ENCODE measurements at regions of chr14 and their contacts with region 1.

Region 1: DNA sequence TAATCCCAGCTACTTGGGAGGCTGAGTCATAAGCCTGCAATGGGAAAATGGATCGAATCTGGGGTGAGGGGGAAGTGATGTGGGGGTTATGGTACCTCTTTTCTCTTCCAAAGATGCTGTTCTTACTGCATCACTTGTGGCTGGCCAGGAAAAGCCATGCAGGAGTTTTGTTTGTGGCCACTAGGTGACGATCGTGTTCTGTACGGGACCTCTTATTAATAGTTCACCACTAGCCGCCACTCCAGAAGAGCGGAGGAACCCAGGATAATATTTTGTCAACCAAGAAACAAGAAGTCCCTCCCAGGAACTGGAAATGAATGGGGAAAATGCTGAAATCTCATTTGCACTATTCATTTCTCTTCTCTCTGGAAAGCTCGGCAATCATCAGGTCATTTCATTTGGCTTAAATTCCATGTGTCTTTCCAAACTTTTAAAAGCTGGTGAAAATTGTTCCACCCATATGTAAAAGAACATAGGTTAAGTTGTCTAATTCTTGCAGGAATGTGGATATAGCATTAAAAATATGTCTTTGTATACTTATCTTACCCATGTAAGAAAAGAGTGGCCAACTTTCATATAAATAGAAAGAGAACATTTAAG is 8.9 kb downstream of the GPR65 start:
- DNase-seq: peak; percentile 69
- H3K4me3 Mint-ChIP-seq: no peak overlapping the region
- H3K27ac Mint-ChIP-seq: no peak overlapping the region
- H3K4me1 Mint-ChIP-seq: no peaks in the 10 kb centered on the region
- H3K27me3 Mint-ChIP-seq: peaks cover 46% of the 10 kb centered on the region
- CTCF ChIP-seq: peak; percentile 92

Region 2: GRCh38 chr14:87547536-87547935 is 466.3 kb before region 1 on chr14:
- CTCF ChIA-PET with region 1: no interaction called
- POLR2A ChIA-PET with region 1: no interaction called
- intact Hi-C with region 1: no loop called
- DNase-seq: no peak
- H3K4me3 Mint-ChIP-seq: no peak overlapping the region
- H3K27ac Mint-ChIP-seq: no peak overlapping the region
- H3K4me1 Mint-ChIP-seq: no peaks in the 10 kb centered on the region
- H3K27me3 Mint-ChIP-seq: no peaks in the 10 kb centered on the region
- CTCF ChIP-seq: no peak

Region 3: GRCh38 chr14:87994974-87995373 is 18.9 kb before region 1 on chr14:
- CTCF ChIA-PET with region 1: interaction called, 10 read pairs
- POLR2A ChIA-PET with region 1: no interaction called
- intact Hi-C with region 1: no loop called
- DNase-seq: no peak
- H3K4me3 Mint-ChIP-seq: no peak overlapping the region
- H3K27ac Mint-ChIP-seq: no peak overlapping the region
- H3K4me1 Mint-ChIP-seq: peaks cover under 1% of the 10 kb centered on the region
- H3K27me3 Mint-ChIP-seq: peaks cover 20% of the 10 kb centered on the region
- CTCF ChIP-seq: no peak

Region 4: DNA sequence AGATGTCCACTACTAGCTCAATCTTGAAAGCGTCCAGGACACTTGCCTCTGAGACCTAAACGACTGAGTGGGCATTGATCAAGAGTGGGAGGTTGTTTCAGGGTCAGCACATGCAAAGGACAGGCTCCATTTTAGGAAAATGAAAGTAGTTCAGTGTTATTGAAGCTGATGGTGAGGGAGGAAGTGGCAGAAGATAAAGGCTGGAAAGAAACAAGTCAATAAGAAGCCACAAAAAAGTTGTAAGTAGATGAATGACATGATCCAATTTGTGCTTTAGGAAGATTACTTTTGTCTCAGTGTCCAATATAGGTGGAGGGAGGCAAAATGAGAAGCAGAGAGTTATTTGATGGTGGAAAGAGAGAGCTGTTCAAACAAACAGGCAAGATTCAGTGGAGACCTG is 13.0 kb after region 1 on chr14:
- CTCF ChIA-PET with region 1: interaction called, 11 read pairs
- POLR2A ChIA-PET with region 1: no interaction called
- intact Hi-C with region 1: no loop called
- DNase-seq: no peak
- H3K4me3 Mint-ChIP-seq: no peak overlapping the region
- H3K27ac Mint-ChIP-seq: no peak overlapping the region
- H3K4me1 Mint-ChIP-seq: no peaks in the 10 kb centered on the region
- H3K27me3 Mint-ChIP-seq: peaks cover 31% of the 10 kb centered on the region
- CTCF ChIP-seq: no peak

Region 5: DNA sequence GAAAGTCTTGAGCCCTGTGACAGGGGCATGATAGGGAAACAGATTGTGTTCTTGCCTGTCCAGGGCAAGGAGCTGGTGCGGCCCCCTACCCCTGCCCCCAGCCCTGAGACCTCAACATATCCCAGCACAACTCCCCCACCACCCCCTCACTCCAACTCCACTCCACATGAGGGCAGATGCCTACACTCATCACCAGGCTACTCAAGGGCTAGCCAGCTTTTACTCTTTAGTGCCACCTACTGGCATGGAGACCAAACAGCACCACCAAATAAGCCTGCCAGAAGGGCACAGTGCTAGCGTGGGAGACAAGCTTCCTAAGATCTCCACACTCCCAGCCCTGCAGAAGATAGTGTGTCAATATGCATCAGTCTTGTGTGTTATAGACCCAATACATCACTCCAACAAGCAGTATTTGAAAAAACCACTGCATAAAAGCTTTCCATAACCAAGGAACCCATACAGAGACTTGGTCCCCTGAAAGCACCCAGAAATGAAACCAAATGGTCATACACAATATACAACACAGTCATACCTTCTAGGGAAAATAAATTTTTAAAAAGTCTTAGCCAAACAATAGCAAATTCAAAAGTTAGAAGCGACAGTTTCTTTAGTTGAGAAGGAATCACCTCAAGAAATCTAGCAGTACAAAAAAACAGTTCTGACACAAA is 154.8 kb after region 1 on chr14:
- CTCF ChIA-PET with region 1: interaction called, 51 read pairs
- POLR2A ChIA-PET with region 1: no interaction called
- intact Hi-C with region 1: loop called (anchors 1 kb)
- DNase-seq: peak; percentile 60
- H3K4me3 Mint-ChIP-seq: no peak overlapping the region
- H3K27ac Mint-ChIP-seq: no peak overlapping the region
- H3K4me1 Mint-ChIP-seq: no peaks in the 10 kb centered on the region
- H3K27me3 Mint-ChIP-seq: peaks cover 39% of the 10 kb centered on the region
- CTCF ChIP-seq: peak; percentile 60

Region 6: GRCh38 chr14:88380405-88380804 is 366.6 kb after region 1 on chr14:
- CTCF ChIA-PET with region 1: interaction called, 4 read pairs
- POLR2A ChIA-PET with region 1: no interaction called
- intact Hi-C with region 1: loop called (anchors 5 kb)
- DNase-seq: peak; percentile 8
- H3K4me3 Mint-ChIP-seq: no peak overlapping the region
- H3K27ac Mint-ChIP-seq: no peak overlapping the region
- H3K4me1 Mint-ChIP-seq: no peaks in the 10 kb centered on the region
- H3K27me3 Mint-ChIP-seq: peaks cover 15% of the 10 kb centered on the region
- CTCF ChIP-seq: peak; percentile 21

Region 7: DNA sequence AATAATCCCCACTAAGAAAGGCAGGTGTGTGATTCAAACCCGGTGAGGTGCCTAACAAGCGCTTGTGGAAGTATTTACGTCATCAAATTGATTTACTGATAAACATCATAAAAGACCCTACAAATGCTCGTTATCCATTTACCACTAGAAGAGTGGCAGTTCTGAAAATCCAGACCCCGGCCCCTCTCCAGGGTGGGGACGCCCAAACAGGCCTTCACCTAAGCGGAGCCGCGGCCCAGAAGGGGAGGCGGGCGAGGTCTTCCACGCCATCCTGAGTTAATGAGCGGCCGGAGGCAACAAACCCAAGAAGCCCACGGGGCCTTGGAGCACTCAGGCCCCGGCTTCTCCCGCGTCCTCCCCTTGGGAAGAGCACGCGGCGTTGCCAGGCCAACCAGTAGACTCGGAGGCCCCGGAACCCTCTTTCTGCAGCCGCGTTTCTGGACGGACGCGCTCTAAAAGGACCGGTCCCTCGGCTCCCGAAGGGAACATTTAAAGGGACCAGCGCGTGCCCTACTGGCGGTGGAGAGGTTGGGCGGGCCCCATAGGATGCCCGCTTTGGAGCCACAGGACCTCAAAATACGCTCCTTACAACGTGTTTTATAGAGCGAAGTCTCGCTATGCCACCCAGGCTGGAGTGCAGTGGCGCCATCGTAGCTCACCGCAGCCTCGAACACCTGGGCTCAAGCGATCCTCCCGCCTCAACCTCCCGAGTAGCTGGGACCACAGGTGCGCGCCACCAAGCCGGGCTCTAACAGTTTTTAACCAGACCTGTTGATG is 537.4 kb after region 1 on chr14:
- CTCF ChIA-PET with region 1: interaction called, 5 read pairs
- POLR2A ChIA-PET with region 1: interaction called, 3 read pairs
- intact Hi-C with region 1: loop called (anchors 10 kb)
- DNase-seq: peak; percentile 89
- H3K4me3 Mint-ChIP-seq: peak overlapping the region; percentile 78
- H3K27ac Mint-ChIP-seq: peak overlapping the region; percentile 42
- H3K4me1 Mint-ChIP-seq: no peaks in the 10 kb centered on the region
- H3K27me3 Mint-ChIP-seq: no peaks in the 10 kb centered on the region
- CTCF ChIP-seq: peak; percentile 20